Right ventricle myocardium inferior (tissue), 1 donor: ENCODE measurements at regions of chr3 and their contacts with region 1.

Region 1: DNA sequence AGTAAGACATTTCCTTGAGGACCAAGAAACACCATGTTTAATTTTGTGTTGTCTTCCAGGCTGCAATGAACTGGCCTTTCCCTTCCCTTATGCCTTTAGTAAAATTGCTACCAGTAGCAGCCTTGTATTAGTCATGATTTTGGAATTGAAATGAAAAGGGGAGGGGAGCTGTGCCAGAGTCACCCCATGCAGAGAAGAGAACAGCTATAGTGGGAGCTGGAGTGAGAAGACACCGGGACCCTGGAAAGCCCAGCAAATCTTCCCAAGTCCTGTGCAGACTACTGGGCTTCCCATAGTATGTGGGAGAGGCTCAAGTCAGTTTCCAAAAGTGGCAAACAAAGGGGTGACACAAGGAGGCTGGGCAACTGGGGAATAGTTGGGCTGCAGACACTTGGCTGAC is 178.5 kb downstream of the NR1D2 start:
- DNase-seq: no peak
- ATAC-seq: no peak

Region 2: DNA sequence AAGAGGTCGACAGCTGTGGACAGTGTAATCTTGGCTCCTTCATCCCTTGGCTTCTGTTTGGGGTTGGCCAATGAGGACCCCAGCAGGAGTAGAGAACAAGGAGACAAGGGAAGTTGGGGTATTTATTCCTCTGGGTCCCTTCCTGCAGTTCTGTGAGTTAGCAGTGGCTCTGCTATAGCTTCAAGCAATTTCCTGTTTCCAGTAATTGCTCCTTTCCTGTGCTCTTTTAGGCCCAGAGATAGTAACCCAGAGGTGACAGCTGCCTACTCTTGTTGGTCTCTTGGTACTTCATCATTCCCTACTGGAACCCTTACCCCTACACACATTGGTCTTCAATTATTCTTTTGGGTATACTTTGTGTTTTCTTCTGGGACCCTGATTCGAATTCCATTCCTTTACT is 85.6 kb before region 1 on chr3:
- intact Hi-C with region 1: no loop called
- DNase-seq: no peak
- ATAC-seq: no peak

Region 3: DNA sequence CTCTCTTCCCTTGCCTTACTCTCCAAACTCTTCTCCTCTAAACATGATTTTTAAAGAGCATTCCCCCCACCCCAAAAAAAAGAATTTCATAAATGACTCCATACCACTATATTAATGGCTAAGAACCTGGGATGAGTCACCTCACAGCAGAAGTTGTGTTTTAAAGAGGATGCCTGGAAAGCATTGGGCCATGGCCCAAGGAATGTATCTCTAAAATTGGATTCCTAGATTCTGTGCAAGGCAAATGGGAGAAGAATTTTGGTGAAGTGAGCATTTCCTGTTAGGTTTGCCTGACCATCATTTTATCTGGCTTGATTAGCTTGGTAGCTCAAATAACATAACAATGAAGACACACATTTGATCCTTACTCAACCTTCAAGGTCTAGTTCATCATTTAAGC is 72.9 kb after region 1 on chr3:
- intact Hi-C with region 1: no loop called
- DNase-seq: no peak
- ATAC-seq: no peak

Region 4: GRCh38 chr3:24608701-24609390 is 485.2 kb after region 1 on chr3:
- intact Hi-C with region 1: loop called (anchors 5 kb)
- DNase-seq: no peak
- ATAC-seq: no peak

Region 5: DNA sequence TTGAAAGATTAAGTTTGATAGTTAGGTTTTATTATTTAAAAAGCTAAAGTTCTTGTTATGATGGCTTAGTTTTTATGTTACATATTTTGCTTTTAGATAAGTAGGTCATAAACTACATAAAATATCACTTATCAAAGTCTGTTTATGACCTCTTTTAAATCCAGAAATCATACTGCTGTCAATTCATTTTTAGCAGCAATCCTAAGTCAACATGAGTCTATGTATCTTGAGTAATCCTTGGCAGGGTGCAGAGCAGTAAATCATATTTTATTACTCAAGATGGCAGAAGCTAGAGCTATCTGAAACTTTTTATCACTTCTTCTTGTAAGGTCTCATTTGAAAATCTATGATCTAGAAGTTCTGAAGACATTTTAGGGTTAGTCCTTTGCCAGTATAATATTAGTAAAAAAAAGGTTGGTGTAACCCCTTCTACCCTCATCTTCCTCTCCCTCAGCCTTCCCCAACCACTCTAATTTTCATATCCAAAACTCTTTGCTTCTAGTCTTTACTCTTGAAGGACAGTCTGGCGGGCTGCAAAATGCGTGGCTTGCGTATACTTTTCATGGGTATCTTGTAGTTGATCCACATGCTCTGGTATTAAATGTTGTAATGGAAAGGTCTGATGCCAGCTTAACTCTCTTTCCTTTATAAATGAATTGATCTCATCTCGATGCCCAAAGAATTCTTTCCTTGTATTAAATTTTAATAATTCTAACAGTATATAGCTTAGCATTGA is 505.1 kb after region 1 on chr3:
- intact Hi-C with region 1: no loop called
- DNase-seq: peak; percentile 56
- ATAC-seq: no peak